Aorta (tissue), 5 donors: ENCODE measurements at regions of chr11 and their contacts with region 1.

Region 1: GRCh38 chr11:59753650-59754493 is 1.3 kb upstream of the STX3 start:
- DNase-seq: peak; percentile 91 to 95
- ATAC-seq: peak; percentile 93
- H3K4me3 ChIP-seq: peak overlapping the region; percentile 91 to 95
- H3K27ac ChIP-seq: no peak overlapping the region
- H3K4me1 ChIP-seq: peaks cover 0 to 2% of the 10 kb centered on the region in 2 donors
- H3K27me3 ChIP-seq: no peaks in the 10 kb centered on the region

Region 2: DNA sequence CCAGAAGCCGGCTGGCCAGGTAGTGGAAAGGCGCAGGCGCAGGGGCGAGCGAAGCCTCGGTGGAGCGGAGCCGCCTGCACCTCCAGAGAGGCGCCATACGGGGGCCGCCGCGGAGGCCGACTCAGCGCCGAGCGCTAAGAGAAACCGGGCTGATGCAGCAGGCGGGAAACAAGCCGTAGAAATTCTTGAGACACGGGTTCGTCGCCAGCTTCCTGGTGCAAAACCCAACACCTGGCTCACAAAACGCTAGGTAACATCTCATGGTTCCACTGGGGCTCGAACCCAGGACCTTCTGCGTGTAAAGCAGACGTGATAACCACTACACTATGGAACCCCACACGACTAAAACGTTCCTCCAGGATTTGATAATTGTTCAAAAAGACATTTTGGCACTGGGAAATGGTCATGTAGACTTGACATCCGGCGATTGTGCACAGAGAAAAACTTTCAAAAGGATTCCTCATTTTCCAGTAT is 203.5 kb before region 1 on chr11:
- intact Hi-C with region 1: loop called (anchors 5 to 10 kb)
- DNase-seq: peak; percentile 81 to 91
- ATAC-seq: peak; percentile 91
- H3K4me3 ChIP-seq: peak overlapping the region; percentile 83 to 93
- H3K27ac ChIP-seq: peak overlapping the region in 1 of 2 donors; percentile 77
- H3K4me1 ChIP-seq: no peaks in the 10 kb centered on the region
- H3K27me3 ChIP-seq: no peaks in the 10 kb centered on the region

Region 3: GRCh38 chr11:59787816-59788215 is 33.9 kb after region 1 on chr11:
- intact Hi-C with region 1: no loop called
- DNase-seq: no peak
- ATAC-seq: no peak
- H3K4me3 ChIP-seq: no peak overlapping the region
- H3K27ac ChIP-seq: no peak overlapping the region
- H3K4me1 ChIP-seq: no peaks in the 10 kb centered on the region
- H3K27me3 ChIP-seq: no peaks in the 10 kb centered on the region

Region 4: DNA sequence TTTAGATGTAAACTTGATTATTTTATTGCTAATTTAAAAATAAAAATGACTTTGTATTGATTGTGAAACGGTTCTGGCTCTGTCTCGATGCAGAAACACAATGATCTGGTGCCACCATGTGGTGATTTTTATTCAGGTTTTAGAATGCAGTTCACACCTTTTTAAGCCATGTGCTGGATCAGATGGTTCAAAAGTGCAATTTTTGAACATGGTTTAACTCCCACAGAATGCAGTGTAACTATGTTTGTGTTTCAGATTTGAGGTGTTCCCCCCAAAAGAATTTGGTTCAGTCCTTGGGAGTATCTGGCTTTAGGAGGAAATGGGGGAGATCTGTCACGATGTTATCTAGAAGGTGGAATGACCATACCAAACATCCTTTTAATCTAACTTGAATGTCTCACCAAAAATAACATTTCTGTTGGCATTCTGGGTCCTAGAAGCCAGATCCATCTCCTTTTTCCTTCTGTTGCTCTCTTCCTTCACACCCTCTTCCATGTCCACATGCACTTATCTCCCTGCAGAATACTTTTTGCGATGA is 48.8 kb after region 1 on chr11:
- intact Hi-C with region 1: loop called (anchors 1 to 2 kb)
- DNase-seq: no peak
- ATAC-seq: peak; percentile 88
- H3K4me3 ChIP-seq: no peak overlapping the region
- H3K27ac ChIP-seq: no peak overlapping the region
- H3K4me1 ChIP-seq: no peaks in the 10 kb centered on the region
- H3K27me3 ChIP-seq: no peaks in the 10 kb centered on the region

Region 5: DNA sequence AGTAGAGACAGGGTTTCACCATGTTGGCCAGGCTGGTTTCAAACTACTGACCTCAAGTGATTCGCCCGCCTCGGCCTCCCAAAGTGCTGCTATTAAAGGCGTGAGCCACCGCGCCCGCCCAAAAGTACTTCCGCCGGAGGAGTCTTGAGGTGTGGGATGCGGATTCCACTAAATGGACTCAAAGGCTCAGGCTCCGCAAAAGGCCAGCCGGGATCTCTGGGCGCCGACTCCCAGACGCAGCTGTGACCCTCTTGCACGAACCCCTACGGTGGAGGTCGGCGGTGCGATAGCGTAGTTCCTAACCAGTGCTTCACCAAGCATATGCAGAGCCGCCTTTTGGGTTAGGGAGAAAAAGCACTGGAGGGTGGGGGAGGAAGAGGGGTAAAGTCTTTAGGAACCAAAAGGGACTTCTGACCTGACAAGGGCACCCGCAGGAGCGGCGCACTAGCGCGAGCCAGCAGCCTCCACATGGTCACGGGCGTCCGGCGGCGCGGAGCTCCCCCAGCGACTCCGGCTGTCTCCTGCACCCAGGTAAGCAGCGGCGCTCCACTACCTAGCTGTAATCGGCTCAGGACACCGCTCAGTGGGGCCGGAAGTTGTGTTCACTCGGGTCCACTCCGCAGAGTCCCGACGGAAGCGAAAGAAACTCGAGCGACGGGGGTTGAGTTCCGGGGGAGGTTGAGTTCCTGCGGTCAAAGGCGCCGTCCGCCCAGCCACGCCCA is 56.5 kb after region 1 on chr11 and contains the start of gene MRPL16:
- intact Hi-C with region 1: loop called in 1 of 2 experiments (anchors 2 kb)
- DNase-seq: peak; percentile 91 to 94
- ATAC-seq: peak; percentile 97
- H3K4me3 ChIP-seq: peak within 1 kb of the TSS; percentile 70 to 96
- H3K27ac ChIP-seq: peak within 1 kb of the TSS in 1 of 2 donors; percentile 77
- H3K4me1 ChIP-seq: no peaks in the 10 kb centered on the region
- H3K27me3 ChIP-seq: no peaks in the 10 kb centered on the region
- total RNA-seq, gene MRPL16: 25.3 to 29.1 TPM